ENCODE measurements at regions of chr1 and their contacts with region 1.

Region 1: DNA sequence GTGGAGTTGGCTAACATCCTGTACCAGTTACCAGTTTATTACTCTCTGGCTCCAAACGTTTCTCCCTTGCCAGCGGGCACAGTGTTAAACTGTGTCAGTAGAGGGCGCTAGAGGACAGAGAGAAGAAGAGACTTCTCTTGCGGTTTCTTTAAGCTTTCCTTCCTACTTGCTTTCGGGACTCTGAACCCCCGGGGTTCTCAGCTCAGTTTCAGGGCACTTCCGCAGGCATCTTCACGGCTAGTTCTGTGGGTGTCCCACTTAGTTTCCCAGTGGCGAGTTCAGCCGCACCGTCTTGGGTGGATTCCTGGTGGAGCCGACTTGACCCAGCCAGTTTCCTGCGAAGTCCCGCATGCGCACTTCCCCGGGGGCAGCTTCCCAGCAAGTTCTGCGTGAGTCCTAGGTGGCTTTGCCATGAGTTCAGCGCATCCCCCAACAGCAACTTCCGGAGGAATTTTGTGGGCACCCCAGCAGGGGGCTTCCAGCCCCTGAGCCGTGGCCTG is 37.9 kb upstream of the BTG2 start:
- DNase-seq: peak; percentile 86 to 88 (median 87)
- ATAC-seq: peak; percentile 84
- H3K4me3 ChIP-seq: peak overlapping the region in 1 of 2 donors; percentile 24
- H3K27ac ChIP-seq: peak overlapping the region in 3 of 4 donors; percentile 50 to 74 (median 70)
- H3K4me1 ChIP-seq: peaks cover 5% of the 10 kb centered on the region
- H3K27me3 ChIP-seq: no peaks in the 10 kb centered on the region
- CTCF ChIP-seq: peak; percentile 92 to 99 (median 95)
- POLR2A ChIP-seq: no peak

Region 2: DNA sequence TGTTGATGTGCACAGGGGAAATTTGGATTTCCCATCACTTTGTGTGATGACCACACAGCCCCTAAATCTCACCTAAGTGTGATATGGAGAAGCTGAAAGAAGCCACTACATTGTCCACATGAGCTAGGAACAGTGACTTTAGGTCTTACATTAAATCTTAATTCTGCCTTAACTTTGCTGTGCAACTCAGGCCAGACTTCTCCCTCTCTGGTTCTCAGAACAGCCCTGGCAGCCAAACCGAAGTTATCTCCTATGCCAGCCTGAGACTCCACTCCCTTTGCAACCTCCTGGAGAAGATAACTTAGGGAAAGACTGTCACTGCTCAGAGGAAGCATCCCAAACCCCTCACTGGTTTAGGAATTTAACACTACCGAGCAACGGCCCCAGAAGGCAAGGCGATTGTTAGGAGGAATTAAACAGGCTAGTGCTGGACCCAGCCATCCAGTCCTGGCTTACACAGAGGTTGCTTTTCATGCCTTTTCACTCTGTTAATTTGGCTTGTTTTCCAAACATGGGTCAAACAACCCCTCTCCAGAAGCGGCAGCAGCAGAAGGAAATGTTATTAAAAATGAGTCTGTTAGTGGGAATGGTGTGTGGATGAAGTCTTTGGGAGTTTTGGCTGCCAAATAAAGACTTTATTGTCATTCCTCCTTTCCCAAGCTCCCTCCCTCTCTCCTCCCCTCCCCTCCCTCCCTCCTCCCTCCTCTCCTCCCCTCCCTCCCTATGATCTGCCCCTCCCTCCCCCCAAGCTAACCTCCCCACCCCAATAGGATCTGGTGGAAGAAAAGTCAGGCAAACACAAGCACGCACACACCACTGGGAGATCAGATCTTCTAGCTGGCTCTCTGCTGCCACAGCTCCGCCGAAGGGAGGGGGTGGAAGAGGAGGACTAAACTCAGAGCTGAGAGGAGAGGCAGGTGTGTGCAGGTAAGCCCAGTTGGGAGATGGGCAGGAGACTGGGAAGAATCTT is 207.9 kb after region 1 on chr1 and contains the start of gene PRELP:
- intact Hi-C with region 1: loop called (anchors 5 kb)
- DNase-seq: peak; percentile 29 to 61 (median 56)
- ATAC-seq: peak; percentile 69
- H3K4me3 ChIP-seq: no peak within 1 kb of the TSS
- H3K27ac ChIP-seq: peak within 1 kb of the TSS; percentile 24 to 41 (median 28)
- H3K4me1 ChIP-seq: peaks cover 5% of the 10 kb centered on the region
- H3K27me3 ChIP-seq: no peaks in the 10 kb centered on the region
- CTCF ChIP-seq: peak in 1 of 7 experiments; percentile 7
- POLR2A ChIP-seq: peak in 1 of 3 donors; percentile 22
- total RNA-seq, gene PRELP: 14.8 to 28.0 TPM

Region 3: GRCh38 chr1:203492082-203492747 is 224.8 kb after region 1 on chr1:
- intact Hi-C with region 1: loop called (anchors 5 kb)
- DNase-seq: no peak
- ATAC-seq: no peak
- H3K4me3 ChIP-seq: no peak overlapping the region
- H3K27ac ChIP-seq: no peak overlapping the region
- H3K4me1 ChIP-seq: peaks cover 10% of the 10 kb centered on the region
- H3K27me3 ChIP-seq: no peaks in the 10 kb centered on the region
- CTCF ChIP-seq: no peak
- POLR2A ChIP-seq: no peak

Measured in body of pancreas (tissue), 4 donors.